Sigmoid colon (tissue), 7 donors: ENCODE measurements at regions of chr4 and their contacts with region 1.

Region 1: DNA sequence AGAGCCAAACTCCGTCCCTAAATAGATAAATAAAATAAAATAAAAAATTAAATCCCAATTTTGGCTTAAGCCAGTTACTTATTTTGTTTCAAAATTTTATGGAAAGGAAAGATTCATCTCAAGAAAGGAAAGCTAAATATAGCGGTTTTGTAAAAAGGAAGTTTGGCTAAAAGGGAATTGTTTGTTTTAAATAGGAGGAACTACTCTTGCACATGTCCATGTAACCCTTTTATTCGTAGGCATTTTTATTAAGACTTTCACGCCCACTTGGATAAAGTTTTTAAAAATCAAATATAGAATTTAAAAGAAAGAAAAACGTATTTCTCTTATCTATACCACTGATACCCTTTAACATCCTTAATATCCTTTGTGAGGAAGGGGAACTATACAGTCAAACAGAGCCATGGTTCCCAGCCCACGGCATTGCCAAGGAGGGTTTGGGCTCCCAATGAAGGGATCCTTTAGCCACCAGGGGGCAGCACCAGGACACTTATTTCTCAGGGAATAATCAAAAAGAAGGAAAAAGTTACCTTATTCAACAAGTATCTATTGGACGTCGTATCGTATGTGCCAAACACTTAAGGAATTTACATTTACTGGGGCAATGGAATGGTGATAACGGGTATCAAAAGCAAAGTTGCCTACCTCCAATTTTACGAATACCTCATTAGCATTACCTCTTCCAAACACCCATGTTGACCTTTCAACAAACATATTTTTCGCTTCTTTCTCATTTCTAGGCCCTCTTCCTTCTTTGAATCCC is 27.7 kb downstream of the CDKN2AIP start:
- DNase-seq: peak; percentile 89
- H3K4me3 ChIP-seq: peak overlapping the region in 1 of 4 donors; percentile 8
- H3K27ac ChIP-seq: no peak overlapping the region
- H3K4me1 ChIP-seq: peaks cover 0 to 4% (median 0%) of the 10 kb centered on the region in 4 donors
- H3K27me3 ChIP-seq: no peaks in the 10 kb centered on the region
- CTCF ChIP-seq: peak; percentile 39 to 89 (median 79)
- EP300 ChIP-seq: no peak
- POLR2A ChIP-seq: no peak

Region 2: GRCh38 chr4:183407128-183407585 is 65.0 kb before region 1 on chr4:
- intact Hi-C with region 1: no loop called
- DNase-seq: peak; percentile 84
- H3K4me3 ChIP-seq: peak overlapping the region; percentile 36 to 52 (median 45)
- H3K27ac ChIP-seq: peak overlapping the region; percentile 51 to 60 (median 55)
- H3K4me1 ChIP-seq: peaks cover 0 to 8% (median 0%) of the 10 kb centered on the region in 4 donors
- H3K27me3 ChIP-seq: no peaks in the 10 kb centered on the region
- CTCF ChIP-seq: peak; percentile 66 to 97 (median 84)
- EP300 ChIP-seq: no peak
- POLR2A ChIP-seq: no peak

Region 3: GRCh38 chr4:183602557-183603027 is 130.5 kb after region 1 on chr4:
- intact Hi-C with region 1: loop called (anchors 5 kb)
- DNase-seq: no peak
- H3K4me3 ChIP-seq: no peak overlapping the region
- H3K27ac ChIP-seq: peak overlapping the region in 1 of 4 donors; percentile 17
- H3K4me1 ChIP-seq: no peaks in the 10 kb centered on the region
- H3K27me3 ChIP-seq: no peaks in the 10 kb centered on the region
- CTCF ChIP-seq: peak in 2 of 4 experiments; percentile 12 to 22
- EP300 ChIP-seq: no peak
- POLR2A ChIP-seq: no peak

Region 4: GRCh38 chr4:183659029-183659871 is 187.1 kb after region 1 on chr4 and contains the starts of genes RWDD4 and TRAPPC11:
- intact Hi-C with region 1: loop called (anchors 1 kb)
- DNase-seq: peak; percentile 99
- H3K4me3 ChIP-seq: peak within 1 kb of the TSS; percentile 71 to 96 (median 93)
- H3K27ac ChIP-seq: peak within 1 kb of the TSS; percentile 90 to 96 (median 94)
- H3K4me1 ChIP-seq: peaks cover 0 to 29% (median 26%) of the 10 kb centered on the region in 4 donors
- H3K27me3 ChIP-seq: no peaks in the 10 kb centered on the region
- CTCF ChIP-seq: peak in 3 of 4 experiments; percentile 18 to 44 (median 33)
- EP300 ChIP-seq: no peak
- POLR2A ChIP-seq: peak; percentile 84 to 85
- total RNA-seq, gene RWDD4: 18.0 to 28.5 (median 21.7) TPM
- total RNA-seq, gene TRAPPC11: 32.1 to 58.2 (median 39.9) TPM